ENCODE measurements at regions of chr10 and their contacts with region 1.

Region 1: GRCh38 chr10:96017191-96017687 is 26.1 kb upstream of the CCNJ start:
- DNase-seq: peak; percentile 36
- ATAC-seq: peak; percentile 97
- H3K4me3 ChIP-seq: no peak overlapping the region
- H3K27ac ChIP-seq: no peak overlapping the region
- H3K4me1 ChIP-seq: no peaks in the 10 kb centered on the region
- H3K27me3 ChIP-seq: peaks cover 7% of the 10 kb centered on the region; the same call in 1 of the 2 replicates
- CTCF ChIP-seq: peak; percentile 88

Region 2: GRCh38 chr10:96129387-96130325 is 112.4 kb after region 1 on chr10 and contains the start of gene ZNF518A:
- CTCF ChIA-PET with region 1: no interaction called
- POLR2A ChIA-PET with region 1: no interaction called
- in situ Hi-C with region 1: no loop called
- intact Hi-C with region 1: loop called (anchors 10 kb)
- DNase-seq: peak; percentile 82
- ATAC-seq: peak; percentile 91
- H3K4me3 ChIP-seq: peak within 1 kb of the TSS; percentile 77 to 82
- H3K27ac ChIP-seq: peak within 1 kb of the TSS; percentile 99
- H3K4me1 ChIP-seq: peaks cover 18% of the 10 kb centered on the region
- H3K27me3 ChIP-seq: peaks cover 3% of the 10 kb centered on the region
- CTCF ChIP-seq: no peak
- total RNA-seq, gene ZNF518A: 26.1 TPM

Region 3: DNA sequence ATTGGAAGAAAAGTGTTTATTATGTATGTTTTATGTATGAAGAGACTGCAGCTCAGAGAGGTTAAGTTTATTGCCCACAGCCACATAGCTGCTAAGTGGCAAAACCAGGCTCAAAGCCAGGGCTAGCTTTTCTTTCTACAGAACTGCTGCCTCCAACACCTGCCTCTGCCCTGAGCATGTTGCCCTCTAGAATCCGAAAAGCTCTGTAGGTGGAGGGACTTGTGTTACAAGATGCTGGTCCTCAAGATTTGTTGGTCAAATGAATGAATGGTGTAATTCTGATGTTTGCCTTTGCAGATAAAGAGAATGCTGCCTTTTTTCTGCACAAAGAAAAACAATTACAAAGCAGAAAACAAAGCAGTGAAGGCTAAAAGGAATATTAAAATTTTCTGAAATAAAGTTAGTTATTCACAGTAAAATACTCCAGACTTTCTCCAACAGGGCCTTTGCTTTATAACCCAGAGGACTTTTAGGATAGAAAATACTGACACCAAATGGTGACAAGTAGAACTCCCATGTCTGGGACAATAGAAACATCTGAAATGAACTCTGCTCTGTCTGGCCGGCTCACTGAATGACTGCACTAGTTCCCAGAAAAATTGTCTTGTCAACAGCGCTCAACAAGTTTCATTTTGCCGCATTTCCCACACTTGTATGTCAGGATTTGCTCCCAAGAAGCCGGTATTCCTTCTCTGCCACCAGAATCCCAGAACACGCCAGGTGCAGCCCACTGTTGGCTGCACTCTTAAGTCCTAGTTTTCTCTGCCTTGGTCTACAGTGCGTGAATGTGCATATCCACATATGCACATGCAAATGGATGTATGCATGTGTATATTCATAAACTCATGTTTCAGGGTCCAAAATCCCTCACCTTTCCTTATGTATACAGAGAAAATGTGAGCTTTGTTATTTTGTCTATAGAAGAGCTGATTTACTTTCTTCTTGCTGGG is 276.0 kb after region 1 on chr10:
- CTCF ChIA-PET with region 1: interaction called, 7 read pairs
- POLR2A ChIA-PET with region 1: no interaction called
- in situ Hi-C with region 1: no loop called
- intact Hi-C with region 1: loop called (anchors 1 kb)
- DNase-seq: peak; percentile 22
- ATAC-seq: peak; percentile 96
- H3K4me3 ChIP-seq: no peak overlapping the region
- H3K27ac ChIP-seq: no peak overlapping the region
- H3K4me1 ChIP-seq: no peaks in the 10 kb centered on the region
- H3K27me3 ChIP-seq: peaks cover 48% of the 10 kb centered on the region
- CTCF ChIP-seq: peak; percentile 72